ENCODE measurements at regions of chr14 and their contacts with region 1.

Region 1: DNA sequence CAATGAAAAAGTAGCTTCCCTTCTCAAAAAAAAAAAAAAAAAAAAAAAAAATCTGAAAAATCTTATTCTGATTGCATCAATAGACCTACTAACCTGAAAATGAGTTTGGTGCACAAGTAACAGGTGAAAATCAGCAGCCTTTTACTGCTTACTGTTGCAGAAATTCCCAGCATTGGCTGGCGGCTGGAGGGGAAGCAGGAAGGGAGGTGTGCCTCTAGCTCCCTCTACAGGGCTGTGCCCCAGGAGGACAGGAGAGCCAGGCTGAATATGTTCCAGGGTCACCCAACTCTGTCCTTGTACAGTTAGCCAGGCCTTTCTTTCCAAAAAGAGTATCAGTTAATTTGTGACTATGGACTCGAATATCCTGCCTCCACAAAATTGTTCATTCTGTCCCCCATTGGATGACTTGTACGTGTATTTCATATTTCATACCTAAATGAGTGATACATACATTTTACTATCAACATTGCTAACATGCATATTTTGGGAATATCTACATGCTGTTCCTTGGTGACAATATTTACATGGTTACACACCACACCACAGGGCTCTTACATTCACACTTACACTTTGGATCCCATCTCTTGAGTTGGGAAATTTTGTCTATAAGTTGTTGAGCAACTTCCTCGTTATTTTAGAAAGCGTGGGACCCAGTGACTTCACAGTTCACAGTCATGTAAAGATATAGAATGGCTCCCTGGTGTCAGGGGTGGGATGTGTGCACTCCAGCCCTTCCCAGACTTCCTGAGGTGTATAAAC is 124.8 kb downstream of the SAMD4A start:
- DNase-seq: no peak
- H3K4me3 ChIP-seq: no peak overlapping the region
- CTCF ChIP-seq: peak; percentile 94

Region 2: GRCh38 chr14:54475187-54475899 is 216.4 kb before region 1 on chr14:
- CTCF ChIA-PET with region 1: no interaction called
- POLR2A ChIA-PET with region 1: no interaction called
- DNase-seq: no peak
- H3K4me3 ChIP-seq: no peak overlapping the region
- CTCF ChIP-seq: no peak

Region 3: GRCh38 chr14:54498095-54498531 is 193.6 kb before region 1 on chr14:
- CTCF ChIA-PET with region 1: no interaction called
- POLR2A ChIA-PET with region 1: no interaction called
- DNase-seq: no peak
- H3K4me3 ChIP-seq: no peak overlapping the region
- CTCF ChIP-seq: no peak

Region 4: DNA sequence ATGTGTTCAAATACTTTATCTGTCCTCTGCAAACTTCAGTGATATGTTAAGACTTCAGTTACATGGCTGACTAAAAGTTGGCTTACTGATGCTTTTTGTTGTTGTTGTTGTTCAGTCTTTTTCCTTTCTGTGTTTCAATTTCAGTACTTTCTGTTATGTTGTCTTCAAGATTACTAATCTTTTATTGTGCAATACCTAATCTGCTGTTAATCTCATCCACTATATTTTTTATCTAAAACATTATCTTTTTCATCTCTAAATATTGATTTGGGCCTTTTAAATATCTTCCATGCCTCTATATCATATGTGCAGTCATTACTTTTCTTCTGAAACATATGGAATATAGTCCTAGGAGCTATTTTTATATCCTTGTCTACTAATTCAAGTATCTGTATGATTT is 175.0 kb before region 1 on chr14:
- CTCF ChIA-PET with region 1: no interaction called
- POLR2A ChIA-PET with region 1: no interaction called
- DNase-seq: no peak
- H3K4me3 ChIP-seq: no peak overlapping the region
- CTCF ChIP-seq: no peak

Region 5: GRCh38 chr14:54669721-54670561 is 21.8 kb before region 1 on chr14:
- CTCF ChIA-PET with region 1: interaction called, 10 read pairs
- POLR2A ChIA-PET with region 1: interaction called, 7 read pairs
- DNase-seq: no peak
- H3K4me3 ChIP-seq: no peak overlapping the region
- CTCF ChIP-seq: no peak